Psoas muscle (tissue), 8 donors: ENCODE measurements at regions of chr2 and their contacts with region 1.

Region 1: DNA sequence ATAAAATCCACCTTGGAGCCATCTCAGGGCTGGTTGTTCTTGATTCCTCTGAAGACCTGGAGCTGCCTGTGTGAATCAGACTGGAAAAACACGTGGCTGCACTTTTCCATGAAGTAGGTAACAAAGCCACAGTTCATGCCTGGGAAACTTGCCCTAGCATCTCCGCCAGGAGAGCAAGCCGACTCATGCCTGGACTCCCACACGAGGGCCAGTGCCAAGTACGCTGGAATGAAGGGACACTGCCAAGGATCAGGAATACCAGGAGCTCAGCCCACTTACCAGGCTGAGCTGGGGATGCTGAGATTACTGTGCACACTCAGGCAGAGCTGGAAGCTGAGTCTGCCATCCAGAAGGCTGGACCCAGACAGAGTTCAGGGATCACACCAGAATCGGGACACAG is 10.9 kb upstream of the FHL2 start:
- DNase-seq: peak; percentile 81 to 86
- ATAC-seq: peak; percentile 80 to 91 (median 86)
- H3K4me3 ChIP-seq: no peak overlapping the region
- H3K27ac ChIP-seq: peak overlapping the region; percentile 57
- H3K4me1 ChIP-seq: peaks cover 27% of the 10 kb centered on the region
- H3K27me3 ChIP-seq: no peaks in the 10 kb centered on the region
- CTCF ChIP-seq: no peak

Region 2: GRCh38 chr2:105337124-105338019 is 72.3 kb before region 1 on chr2 and contains the start of gene C2orf49:
- intact Hi-C with region 1: no loop called
- DNase-seq: peak; percentile 90 to 93
- ATAC-seq: peak; percentile 95 to 99 (median 96)
- H3K4me3 ChIP-seq: peak within 1 kb of the TSS; percentile 91
- H3K27ac ChIP-seq: peak within 1 kb of the TSS; percentile 94
- H3K4me1 ChIP-seq: peaks cover 14% of the 10 kb centered on the region
- H3K27me3 ChIP-seq: no peaks in the 10 kb centered on the region
- CTCF ChIP-seq: no peak
- total RNA-seq, gene C2orf49: 14.8 to 19.4 (median 15.5) TPM

Region 3: GRCh38 chr2:105449076-105449475 is 39.4 kb after region 1 on chr2:
- intact Hi-C with region 1: loop called in 1 of 2 experiments (anchors 5 kb)
- DNase-seq: no peak
- ATAC-seq: peak; percentile 31 to 53 (median 40)
- H3K4me3 ChIP-seq: no peak overlapping the region
- H3K27ac ChIP-seq: no peak overlapping the region
- H3K4me1 ChIP-seq: peaks cover 14% of the 10 kb centered on the region
- H3K27me3 ChIP-seq: no peaks in the 10 kb centered on the region
- CTCF ChIP-seq: no peak

Region 4: GRCh38 chr2:105468582-105469042 is 58.9 kb after region 1 on chr2:
- intact Hi-C with region 1: no loop called
- DNase-seq: no peak
- ATAC-seq: no peak
- H3K4me3 ChIP-seq: no peak overlapping the region
- H3K27ac ChIP-seq: no peak overlapping the region
- H3K4me1 ChIP-seq: no peaks in the 10 kb centered on the region
- H3K27me3 ChIP-seq: no peaks in the 10 kb centered on the region
- CTCF ChIP-seq: no peak